Right ventricle myocardium superior (tissue), 1 donor: ENCODE measurements at regions of chr6 and their contacts with region 1.

Region 1: GRCh38 chr6:123715006-123715875 is 78.5 kb upstream of the TRDN start:
- DNase-seq: no peak
- ATAC-seq: peak; percentile 78

Region 2: GRCh38 chr6:123415844-123416468 is 299.3 kb before region 1 on chr6:
- intact Hi-C with region 1: loop called (anchors 5 kb)
- DNase-seq: no peak
- ATAC-seq: peak; percentile 81